ENCODE measurements at regions of chr20 and their contacts with region 1.

Region 1: GRCh38 chr20:47379433-47380150 is 23.1 kb upstream of the ZMYND8 start:
- DNase-seq: no peak
- H3K4me3 ChIP-seq: no peak overlapping the region
- H3K27ac ChIP-seq: no peak overlapping the region
- H3K4me1 ChIP-seq: peaks cover 0 to 22% of the 10 kb centered on the region in 2 donors
- H3K27me3 ChIP-seq: no peaks in the 10 kb centered on the region
- CTCF ChIP-seq: no peak
- POLR2A ChIP-seq: no peak

Region 2: GRCh38 chr20:47196091-47197081 is 183.2 kb before region 1 on chr20:
- intact Hi-C with region 1: loop called in 1 of 2 experiments (anchors 5 kb)
- DNase-seq: peak; percentile 64 to 87 (median 72)
- H3K4me3 ChIP-seq: no peak overlapping the region
- H3K27ac ChIP-seq: no peak overlapping the region
- H3K4me1 ChIP-seq: no peaks in the 10 kb centered on the region
- H3K27me3 ChIP-seq: no peaks in the 10 kb centered on the region
- CTCF ChIP-seq: peak; percentile 92 to 98 (median 96)
- POLR2A ChIP-seq: no peak

Region 3: GRCh38 chr20:47487175-47487917 is 107.8 kb after region 1 on chr20:
- intact Hi-C with region 1: no loop called
- DNase-seq: no peak
- H3K4me3 ChIP-seq: no peak overlapping the region
- H3K27ac ChIP-seq: no peak overlapping the region
- H3K4me1 ChIP-seq: no peaks in the 10 kb centered on the region
- H3K27me3 ChIP-seq: no peaks in the 10 kb centered on the region
- CTCF ChIP-seq: no peak
- POLR2A ChIP-seq: no peak

Measured in adrenal gland (tissue), 19 donors.